ENCODE measurements at regions of chrX and their contacts with region 1.

Region 1: DNA sequence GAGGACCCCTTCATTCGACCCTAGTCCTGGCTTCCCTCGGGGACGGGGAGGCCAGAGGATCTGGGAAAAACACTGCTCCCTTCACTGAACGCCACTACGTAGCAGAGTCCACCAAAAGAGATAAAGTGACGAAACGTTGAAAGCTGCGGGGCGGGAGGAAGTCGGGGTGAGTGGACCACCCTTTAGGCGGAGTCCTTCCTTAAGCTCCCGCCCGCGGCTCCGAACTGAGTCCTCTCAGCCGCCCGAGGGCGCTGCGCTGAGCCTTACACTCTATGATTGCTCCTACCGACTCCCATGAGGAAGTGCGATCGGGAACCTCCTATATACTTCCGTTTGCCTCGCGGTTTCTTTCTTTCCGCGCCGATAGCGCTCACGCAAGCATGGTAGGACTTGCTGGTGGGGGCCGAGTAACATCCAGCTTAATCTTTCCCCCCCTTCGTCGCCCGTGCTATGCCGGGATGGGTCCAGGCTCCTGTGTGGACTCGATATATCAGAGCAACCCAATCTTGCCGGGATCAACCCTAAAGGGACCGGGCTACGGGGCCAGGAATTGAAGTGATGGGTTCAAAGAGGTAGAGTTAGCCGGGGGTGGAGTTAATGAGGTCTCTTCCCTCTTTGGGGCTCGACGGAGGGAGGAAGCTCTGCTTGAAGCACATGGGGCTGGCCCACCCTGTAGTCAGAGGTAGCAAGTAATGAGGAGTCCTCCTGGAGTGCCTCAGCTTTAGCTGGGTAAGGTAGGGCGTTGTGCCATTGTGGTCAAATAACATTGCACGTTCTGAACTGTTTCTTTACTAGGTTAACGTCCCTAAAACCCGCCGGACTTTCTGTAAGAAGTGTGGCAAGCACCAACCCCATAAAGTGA is at the start of gene RPL36A:
- DNase-seq: peak; percentile 72
- H3K4me3 ChIP-seq: peak within 1 kb of the TSS; percentile 75
- H3K27ac ChIP-seq: peak within 1 kb of the TSS; percentile 68
- H3K27me3 ChIP-seq: peaks cover 5% of the 10 kb centered on the region
- CTCF ChIP-seq: peak; percentile 77
- polyA plus RNA-seq, gene RPL36A: 2,019 and 2,123 TPM in 2 replicates

Region 2: GRCh38 chrX:101348452-101349192 is 42.3 kb before region 1 on chrX and contains the start of gene TIMM8A:
- CTCF ChIA-PET with region 1: interaction called, 12 read pairs
- POLR2A ChIA-PET with region 1: interaction called, 9 read pairs
- DNase-seq: peak; percentile 8
- H3K4me3 ChIP-seq: peak within 1 kb of the TSS; percentile 80
- H3K27ac ChIP-seq: peak within 1 kb of the TSS; percentile 31
- H3K27me3 ChIP-seq: no peaks in the 10 kb centered on the region
- CTCF ChIP-seq: no peak
- polyA plus RNA-seq, gene TIMM8A: 6.3 and 8.1 TPM in 2 replicates

Region 3: GRCh38 chrX:101407748-101408531 is 17.0 kb after region 1 on chrX and contains the starts of genes GLA and HNRNPH2:
- CTCF ChIA-PET with region 1: interaction called, 13 read pairs
- POLR2A ChIA-PET with region 1: interaction called, 7 read pairs
- DNase-seq: peak; percentile 95
- H3K4me3 ChIP-seq: peak within 1 kb of the TSS; percentile 85
- H3K27ac ChIP-seq: peak within 1 kb of the TSS; percentile 97
- H3K27me3 ChIP-seq: no peaks in the 10 kb centered on the region
- CTCF ChIP-seq: peak; percentile 21; the same call in 1 of the 2 replicates
- polyA plus RNA-seq, gene GLA: 30.0 and 33.8 TPM in 2 replicates
- polyA plus RNA-seq, gene HNRNPH2: 58.6 and 64.8 TPM in 2 replicates